RWPE1 (cell line): ENCODE measurements at regions of chr17 and their contacts with region 1.

Region 1: GRCh38 chr17:41548844-41549595 is 20.9 kb upstream of the KRT19 start:
- DNase-seq: peak; percentile 79
- H3K27ac ChIP-seq: peak overlapping the region; percentile 98
- CTCF ChIP-seq: peak; percentile 94

Region 2: GRCh38 chr17:41322094-41322902 is 226.7 kb before region 1 on chr17:
- CTCF ChIA-PET with region 1: interaction called, 13 read pairs
- POLR2A ChIA-PET with region 1: no interaction called
- DNase-seq: peak; percentile 40
- H3K27ac ChIP-seq: peak overlapping the region; percentile 32
- CTCF ChIP-seq: peak; percentile 89

Region 3: GRCh38 chr17:41439389-41439788 is 109.6 kb before region 1 on chr17:
- CTCF ChIA-PET with region 1: no interaction called
- POLR2A ChIA-PET with region 1: no interaction called
- DNase-seq: no peak
- H3K27ac ChIP-seq: no peak overlapping the region
- CTCF ChIP-seq: no peak

Region 4: GRCh38 chr17:41535764-41536481 is 13.1 kb before region 1 on chr17:
- CTCF ChIA-PET with region 1: interaction called, 13 read pairs
- POLR2A ChIA-PET with region 1: interaction called, 4 read pairs
- DNase-seq: no peak
- H3K27ac ChIP-seq: no peak overlapping the region
- CTCF ChIP-seq: no peak

Region 5: GRCh38 chr17:41602524-41602923 is 53.5 kb after region 1 on chr17:
- CTCF ChIA-PET with region 1: no interaction called
- POLR2A ChIA-PET with region 1: no interaction called
- DNase-seq: no peak
- H3K27ac ChIP-seq: no peak overlapping the region
- CTCF ChIP-seq: no peak

Region 6: DNA sequence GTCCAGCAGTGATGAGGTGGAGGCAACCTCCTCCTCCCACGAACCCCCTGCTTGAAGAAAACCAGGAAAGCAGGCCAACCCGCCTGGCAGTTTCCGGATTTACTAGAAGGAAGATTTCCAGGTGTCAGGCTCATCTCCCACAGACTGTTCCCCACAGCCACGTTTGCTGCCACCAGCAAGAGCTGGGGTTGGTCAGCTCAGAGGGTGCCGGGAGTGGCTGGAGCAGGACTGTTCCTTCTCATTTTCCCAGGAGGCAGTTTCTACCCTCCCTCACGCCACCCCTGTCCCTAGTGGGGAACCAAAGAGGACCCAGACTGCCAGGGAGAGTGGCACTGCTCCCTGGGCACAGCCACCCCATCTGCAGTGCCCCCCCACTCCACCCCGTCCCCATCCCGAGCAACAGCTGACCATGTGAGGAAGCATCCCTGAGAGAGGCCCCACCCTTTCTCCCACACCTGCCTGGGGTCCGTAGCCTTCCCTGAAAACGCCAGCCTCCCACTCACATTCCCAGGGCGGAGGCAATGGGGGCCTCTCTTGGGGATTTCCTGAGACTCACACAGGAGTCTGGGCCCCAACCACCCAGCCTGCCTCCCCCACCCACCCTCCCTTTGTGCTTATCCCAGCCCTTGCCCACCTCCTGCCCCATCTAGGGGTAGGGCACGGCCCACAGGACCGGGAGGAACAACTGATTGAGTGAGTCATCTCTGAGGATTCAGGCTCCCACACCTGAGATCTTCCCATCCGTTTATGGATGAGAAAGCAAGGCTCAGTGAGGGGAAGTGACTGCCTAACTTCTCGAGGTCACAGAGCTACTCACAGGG is 69.5 kb after region 1 on chr17:
- CTCF ChIA-PET with region 1: interaction called, 11 read pairs
- POLR2A ChIA-PET with region 1: interaction called, 4 read pairs
- DNase-seq: peak; percentile 46
- H3K27ac ChIP-seq: peak overlapping the region; percentile 100
- CTCF ChIP-seq: no peak

Region 7: DNA sequence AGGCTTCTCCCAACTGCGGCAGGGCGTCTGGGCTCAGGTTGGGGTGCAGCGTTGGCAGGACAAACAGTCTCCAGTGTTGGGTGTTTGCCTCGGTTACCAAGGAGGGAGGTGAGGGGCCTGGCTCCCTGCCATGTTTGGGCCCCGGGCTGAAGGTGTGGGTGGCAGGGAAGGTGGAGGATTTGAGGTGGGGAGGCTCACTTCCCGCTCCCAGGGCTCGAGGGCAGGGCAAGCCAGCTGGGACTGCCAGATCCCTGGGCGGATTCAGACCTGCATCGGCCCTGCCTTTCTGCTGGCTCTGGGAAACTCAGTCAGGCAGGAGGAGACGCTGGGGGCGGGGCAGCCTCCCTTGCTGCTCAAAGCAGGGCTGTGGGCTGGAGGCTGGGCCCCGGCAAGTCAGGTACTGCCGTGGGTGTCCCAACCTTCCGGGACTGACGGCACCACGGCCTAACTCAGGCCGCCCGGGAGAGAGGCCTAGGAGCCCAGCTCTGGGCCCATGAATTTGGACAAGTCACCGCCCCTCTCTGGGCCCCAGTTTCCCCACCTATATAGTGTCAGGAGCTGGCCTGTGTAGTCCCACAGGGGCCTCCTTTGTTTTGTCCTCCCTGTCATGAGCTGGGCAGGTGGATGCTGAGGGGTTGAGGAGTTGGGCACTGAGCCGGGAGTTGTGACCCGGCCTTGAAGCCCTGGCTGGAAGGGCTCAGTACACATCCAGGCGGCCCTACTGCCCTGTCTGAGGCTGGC is 106.8 kb after region 1 on chr17:
- CTCF ChIA-PET with region 1: interaction called, 18 read pairs
- POLR2A ChIA-PET with region 1: no interaction called
- DNase-seq: peak; percentile 95
- H3K27ac ChIP-seq: peak overlapping the region; percentile 100
- CTCF ChIP-seq: no peak